ENCODE measurements at regions of chr1 and their contacts with region 1.

Region 1: DNA sequence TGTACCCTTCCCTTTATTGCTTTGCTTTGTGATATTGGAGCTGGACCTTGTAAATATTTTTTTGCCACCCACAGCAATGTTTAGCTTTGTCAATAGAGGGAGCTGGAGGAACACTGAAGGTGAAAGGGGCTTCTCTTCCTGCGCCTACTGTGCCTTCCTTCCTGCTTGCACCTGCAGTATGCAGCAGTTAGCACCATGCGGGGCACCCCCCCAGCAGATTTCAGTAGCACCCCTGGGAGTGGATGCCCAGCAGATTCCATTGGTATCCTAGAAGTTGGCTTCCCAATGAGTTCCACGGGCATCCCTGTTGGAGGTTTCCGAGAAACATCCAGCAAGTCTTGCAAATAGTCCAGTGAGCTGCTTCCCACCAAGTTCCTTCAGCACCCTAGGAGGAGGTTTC is 25.6 kb downstream of the S100A10 start:
- DNase-seq: peak; percentile 78
- H3K4me3 Mint-ChIP-seq: no peak overlapping the region
- H3K27ac Mint-ChIP-seq: peak overlapping the region; percentile 1
- H3K4me1 Mint-ChIP-seq: peaks cover 55% of the 10 kb centered on the region
- H3K27me3 Mint-ChIP-seq: no peaks in the 10 kb centered on the region
- CTCF ChIP-seq: peak; percentile 84

Region 2: GRCh38 chr1:151934048-151934493 is 34.0 kb before region 1 on chr1:
- CTCF ChIA-PET with region 1: interaction called, 12 read pairs
- intact Hi-C with region 1: loop called (anchors 2 kb)
- DNase-seq: peak; percentile 76
- H3K4me3 Mint-ChIP-seq: no peak overlapping the region
- H3K27ac Mint-ChIP-seq: no peak overlapping the region
- H3K4me1 Mint-ChIP-seq: peaks cover 28% of the 10 kb centered on the region
- H3K27me3 Mint-ChIP-seq: no peaks in the 10 kb centered on the region
- CTCF ChIP-seq: peak; percentile 79

Region 3: DNA sequence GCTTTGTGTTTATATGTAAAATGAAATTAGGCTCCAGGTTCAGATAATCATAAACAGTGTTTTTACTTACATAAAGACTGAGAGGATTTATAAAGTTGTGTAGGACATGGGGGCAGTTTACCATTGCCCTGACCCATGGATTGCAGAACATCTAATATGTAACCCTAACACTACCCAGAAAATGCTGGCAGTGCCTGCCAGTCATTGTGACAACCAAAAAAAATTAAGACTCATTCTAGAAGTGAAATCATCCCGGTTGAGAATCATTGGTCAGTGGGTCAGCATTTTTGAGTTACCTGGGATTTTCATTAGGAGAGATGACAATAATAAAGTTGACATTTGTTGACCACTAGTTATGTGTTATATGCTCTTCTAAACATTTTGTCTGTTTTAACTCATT is 27.5 kb before region 1 on chr1:
- CTCF ChIA-PET with region 1: interaction called, 12 read pairs
- intact Hi-C with region 1: loop called (anchors 2 kb)
- DNase-seq: no peak
- H3K4me3 Mint-ChIP-seq: no peak overlapping the region
- H3K27ac Mint-ChIP-seq: peak overlapping the region; percentile 89
- H3K4me1 Mint-ChIP-seq: peaks cover 29% of the 10 kb centered on the region
- H3K27me3 Mint-ChIP-seq: no peaks in the 10 kb centered on the region
- CTCF ChIP-seq: no peak

Region 4: DNA sequence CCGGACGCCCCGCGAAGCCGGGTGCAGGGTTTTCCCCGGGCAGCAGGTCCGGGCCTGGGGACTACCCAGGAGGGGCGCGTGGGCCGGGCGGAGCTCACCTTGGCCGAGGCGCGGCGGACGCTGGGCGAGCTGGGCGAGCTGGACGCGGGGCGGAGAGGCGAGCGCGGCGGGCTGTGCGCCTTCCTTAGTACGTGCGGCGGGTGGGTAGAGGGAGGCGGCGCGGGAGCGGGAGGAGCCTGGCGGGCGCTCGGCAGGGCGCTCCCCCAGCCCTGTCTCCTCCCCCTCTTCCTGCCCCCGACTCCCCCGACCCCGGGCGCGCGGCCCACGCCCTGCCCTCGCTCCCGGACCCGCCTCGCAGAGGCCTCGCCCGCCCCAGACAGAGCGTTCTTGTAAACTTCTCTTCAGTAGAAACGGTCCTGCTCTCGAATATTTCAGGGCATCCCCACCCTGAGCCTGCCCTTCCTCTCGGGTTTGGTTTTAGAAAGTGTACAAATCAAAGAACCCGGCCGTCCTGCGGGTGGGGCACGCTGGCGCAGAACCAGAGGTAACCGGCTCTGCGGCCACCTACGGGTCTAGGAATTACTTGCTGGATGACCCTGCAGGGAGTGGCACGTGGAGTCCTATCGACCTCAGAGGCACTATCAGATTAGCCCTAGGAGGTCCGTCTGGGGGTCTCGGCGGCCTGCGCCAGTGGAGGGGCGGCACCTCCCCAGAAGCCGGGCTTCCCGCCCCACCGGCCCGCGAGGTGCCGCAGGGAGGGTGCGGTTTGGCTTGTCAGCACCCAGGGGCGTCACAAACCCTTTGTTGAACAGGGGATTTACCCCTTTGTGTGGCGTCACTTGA is 25.8 kb after region 1 on chr1 and contains the start of gene S100A10:
- CTCF ChIA-PET with region 1: interaction called, 146 read pairs
- intact Hi-C with region 1: loop called (anchors 1 kb)
- DNase-seq: peak; percentile 91
- H3K4me3 Mint-ChIP-seq: peak within 1 kb of the TSS; percentile 90
- H3K27ac Mint-ChIP-seq: peak within 1 kb of the TSS; percentile 88
- H3K4me1 Mint-ChIP-seq: peaks cover 54% of the 10 kb centered on the region
- H3K27me3 Mint-ChIP-seq: no peaks in the 10 kb centered on the region
- CTCF ChIP-seq: no peak
- total RNA-seq, gene S100A10: 882 and 921 TPM in 2 replicates

Region 5: GRCh38 chr1:152013664-152014237 is 45.7 kb after region 1 on chr1:
- CTCF ChIA-PET with region 1: interaction called, 10 read pairs
- intact Hi-C with region 1: no loop called
- DNase-seq: peak; percentile 77
- H3K4me3 Mint-ChIP-seq: no peak overlapping the region
- H3K27ac Mint-ChIP-seq: no peak overlapping the region
- H3K4me1 Mint-ChIP-seq: peaks cover 18% of the 10 kb centered on the region
- H3K27me3 Mint-ChIP-seq: no peaks in the 10 kb centered on the region
- CTCF ChIP-seq: peak; percentile 78

Region 6: GRCh38 chr1:152034646-152035405 is 66.8 kb after region 1 on chr1:
- CTCF ChIA-PET with region 1: interaction called, 12 read pairs
- intact Hi-C with region 1: no loop called
- DNase-seq: peak; percentile 85
- H3K4me3 Mint-ChIP-seq: peak overlapping the region; percentile 75
- H3K27ac Mint-ChIP-seq: peak overlapping the region; percentile 90
- H3K4me1 Mint-ChIP-seq: peaks cover 22% of the 10 kb centered on the region
- H3K27me3 Mint-ChIP-seq: no peaks in the 10 kb centered on the region
- CTCF ChIP-seq: peak; percentile 95